Activated CD4-positive, alpha-beta memory T cell treated with anti-CD3 and anti-CD28 coated beads for 36 hours (primary cell): ENCODE measurements at regions of chrX and their contacts with region 1.

Region 1: DNA sequence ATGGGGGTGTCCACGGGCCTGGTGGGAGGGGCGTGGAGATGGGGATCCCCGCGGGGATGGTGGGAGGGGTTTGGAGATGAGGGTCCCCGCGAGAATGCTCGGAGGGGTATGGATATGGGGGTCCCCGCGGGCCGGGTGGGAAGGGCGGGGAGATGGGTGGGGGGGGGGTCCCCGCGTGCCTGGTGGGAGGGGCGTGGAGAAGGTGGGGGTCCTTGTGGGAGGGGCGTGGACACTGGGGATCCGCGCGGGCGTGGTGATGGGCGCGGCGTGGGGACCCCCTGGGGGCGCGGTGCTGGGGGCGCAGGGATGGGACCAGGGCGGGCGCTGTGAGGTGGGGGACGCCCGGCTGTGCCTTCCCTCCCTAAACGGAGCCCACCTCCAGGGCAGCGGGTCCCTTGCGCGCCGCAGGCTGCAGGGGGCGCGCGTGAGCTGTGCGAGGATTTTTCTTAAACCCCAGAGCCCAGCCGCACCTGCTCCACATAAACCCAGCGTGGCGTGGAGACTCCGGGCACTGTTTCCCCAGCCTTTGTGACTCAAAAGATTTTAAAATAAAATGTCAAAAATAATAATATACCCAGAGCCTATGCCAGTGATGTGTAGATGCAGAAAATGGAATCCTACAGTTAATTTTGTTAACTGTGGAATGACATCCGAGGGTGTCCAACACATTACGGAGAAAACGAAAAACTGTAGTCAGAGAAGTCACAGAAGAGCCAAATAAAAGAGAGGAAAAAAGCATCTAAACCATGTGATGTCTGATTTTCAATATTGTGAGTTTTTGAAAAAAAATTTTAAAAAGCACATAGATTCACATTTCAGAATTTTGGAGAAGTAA is 1.5 kb upstream of the ASMTL start:
- DNase-seq: peak; percentile 95
- H3K4me3 Mint-ChIP-seq: peak overlapping the region; percentile 52
- H3K27ac Mint-ChIP-seq: peak overlapping the region; percentile 64
- H3K4me1 Mint-ChIP-seq: peaks cover 19% of the 10 kb centered on the region
- H3K27me3 Mint-ChIP-seq: no peaks in the 10 kb centered on the region

Region 2: GRCh38 chrX:1205680-1206611 is 248.2 kb before region 1 on chrX:
- CTCF ChIA-PET with region 1: no interaction called
- POLR2A ChIA-PET with region 1: no interaction called
- intact Hi-C with region 1: loop called (anchors 5 kb)
- DNase-seq: peak; percentile 50
- H3K4me3 Mint-ChIP-seq: peak overlapping the region; percentile 62
- H3K27ac Mint-ChIP-seq: peak overlapping the region; percentile 30
- H3K4me1 Mint-ChIP-seq: peaks cover 34% of the 10 kb centered on the region
- H3K27me3 Mint-ChIP-seq: peaks cover 3% of the 10 kb centered on the region

Region 3: GRCh38 chrX:1323315-1323714 is 130.9 kb before region 1 on chrX:
- CTCF ChIA-PET with region 1: no interaction called
- POLR2A ChIA-PET with region 1: no interaction called
- intact Hi-C with region 1: loop called (anchors 5 kb)
- DNase-seq: peak; percentile 82
- H3K4me3 Mint-ChIP-seq: no peak overlapping the region
- H3K27ac Mint-ChIP-seq: peak overlapping the region; percentile 9
- H3K4me1 Mint-ChIP-seq: peaks cover 15% of the 10 kb centered on the region
- H3K27me3 Mint-ChIP-seq: peaks cover 11% of the 10 kb centered on the region

Region 4: DNA sequence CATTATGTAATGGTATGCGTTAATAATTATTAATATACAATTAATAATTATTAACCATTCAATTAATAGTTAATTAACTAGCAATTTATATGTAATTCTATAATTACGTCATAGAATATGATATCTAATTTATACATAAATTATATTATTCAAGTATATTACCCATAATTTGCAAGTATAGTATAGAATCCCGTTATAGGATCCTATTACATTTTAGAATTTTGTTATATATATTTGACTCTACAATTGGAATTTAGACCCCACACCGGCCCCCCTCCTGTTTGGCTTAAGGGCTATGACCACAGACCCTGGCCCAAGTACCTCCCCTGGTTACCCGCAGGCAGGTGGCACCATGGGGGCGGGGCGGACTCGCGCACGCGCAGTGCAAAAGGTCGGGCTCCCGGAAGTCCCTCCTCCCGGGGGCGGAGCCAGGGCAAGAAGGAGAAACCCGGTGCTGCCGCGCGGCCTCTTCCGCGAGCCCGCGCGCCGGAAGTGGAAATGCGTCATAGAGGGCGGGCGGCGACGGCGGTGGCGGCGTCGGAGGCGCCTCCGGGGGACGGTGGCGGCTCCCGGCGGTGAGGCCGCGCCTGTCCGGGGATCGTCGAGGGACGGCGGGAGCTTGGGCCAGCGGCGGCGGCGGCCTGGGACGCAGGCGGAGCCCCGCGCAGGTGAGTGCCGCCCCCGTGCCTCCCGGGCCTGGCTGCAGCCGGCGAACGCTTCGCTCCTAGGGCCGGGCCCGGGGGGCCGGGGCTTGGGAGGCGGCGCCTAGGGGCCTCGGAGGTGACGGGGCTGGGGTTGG is 137.1 kb after region 1 on chrX and contains the start of gene AKAP17A:
- CTCF ChIA-PET with region 1: no interaction called
- POLR2A ChIA-PET with region 1: no interaction called
- intact Hi-C with region 1: loop called (anchors 1 kb)
- DNase-seq: peak; percentile 99
- H3K4me3 Mint-ChIP-seq: peak within 1 kb of the TSS; percentile 92
- H3K27ac Mint-ChIP-seq: peak within 1 kb of the TSS; percentile 89
- H3K4me1 Mint-ChIP-seq: peaks cover 31% of the 10 kb centered on the region
- H3K27me3 Mint-ChIP-seq: no peaks in the 10 kb centered on the region
- total RNA-seq, gene AKAP17A: 59.4 to 62.9 TPM

Region 5: GRCh38 chrX:2627272-2627867 is 1173.2 kb after region 1 on chrX:
- CTCF ChIA-PET with region 1: no interaction called
- POLR2A ChIA-PET with region 1: no interaction called
- intact Hi-C with region 1: loop called (anchors 1 kb)
- DNase-seq: peak; percentile 60
- H3K4me3 Mint-ChIP-seq: no peak overlapping the region
- H3K27ac Mint-ChIP-seq: peak overlapping the region; percentile 10
- H3K4me1 Mint-ChIP-seq: peaks cover 34% of the 10 kb centered on the region
- H3K27me3 Mint-ChIP-seq: no peaks in the 10 kb centered on the region